Psoas muscle (tissue), 8 donors: ENCODE measurements at regions of chr1 and their contacts with region 1.

Region 1: DNA sequence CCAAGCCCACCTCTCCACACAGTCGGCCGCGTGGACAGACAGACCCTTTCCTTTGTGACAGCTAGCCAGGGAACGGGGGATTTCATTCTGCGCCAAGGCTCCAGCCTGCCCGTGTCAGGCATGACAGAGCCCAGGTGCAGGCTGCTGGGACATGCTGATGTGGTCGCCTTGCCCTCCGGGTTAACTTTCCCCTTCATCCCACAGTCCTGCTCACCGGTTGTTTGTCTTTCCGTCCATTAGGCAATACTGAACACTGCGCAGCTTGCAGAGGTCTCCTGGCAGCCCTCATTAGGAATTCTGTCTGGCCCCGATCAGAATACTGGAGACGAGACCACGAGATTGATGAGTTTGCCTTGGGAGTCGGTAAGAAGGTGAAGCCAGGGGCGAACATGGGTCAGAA is 62.8 kb downstream of the SPSB1 start:
- DNase-seq: no peak
- ATAC-seq: no peak
- H3K4me3 ChIP-seq: no peak overlapping the region
- H3K27ac ChIP-seq: no peak overlapping the region
- H3K4me1 ChIP-seq: no peaks in the 10 kb centered on the region
- H3K27me3 ChIP-seq: no peaks in the 10 kb centered on the region
- CTCF ChIP-seq: no peak

Region 2: GRCh38 chr1:9317591-9318417 is 37.7 kb before region 1 on chr1:
- intact Hi-C with region 1: loop called in 1 of 2 experiments (anchors 5 kb)
- DNase-seq: peak; percentile 70 to 80
- ATAC-seq: peak in 3 of 4 donors; percentile 25 to 50 (median 34)
- H3K4me3 ChIP-seq: no peak overlapping the region
- H3K27ac ChIP-seq: no peak overlapping the region
- H3K4me1 ChIP-seq: peaks cover 20% of the 10 kb centered on the region
- H3K27me3 ChIP-seq: no peaks in the 10 kb centered on the region
- CTCF ChIP-seq: no peak